ENCODE measurements at regions of chr17 and their contacts with region 1.

Region 1: GRCh38 chr17:47970704-47971463 is at the start of gene CDK5RAP3:
- DNase-seq: peak; percentile 100
- H3K4me3 Mint-ChIP-seq: peak within 1 kb of the TSS; percentile 93
- H3K27ac Mint-ChIP-seq: peak within 1 kb of the TSS; percentile 93
- H3K4me1 Mint-ChIP-seq: peaks cover 22% of the 10 kb centered on the region
- H3K27me3 Mint-ChIP-seq: no peaks in the 10 kb centered on the region
- total RNA-seq, gene CDK5RAP3: 192 and 202 TPM in 2 replicates

Region 2: GRCh38 chr17:47829870-47830269 is 141.0 kb before region 1 on chr17:
- intact Hi-C with region 1: no loop called
- DNase-seq: peak; percentile 78
- H3K4me3 Mint-ChIP-seq: peak overlapping the region; percentile 94
- H3K27ac Mint-ChIP-seq: peak overlapping the region; percentile 89
- H3K4me1 Mint-ChIP-seq: peaks cover 31% of the 10 kb centered on the region
- H3K27me3 Mint-ChIP-seq: no peaks in the 10 kb centered on the region

Region 3: DNA sequence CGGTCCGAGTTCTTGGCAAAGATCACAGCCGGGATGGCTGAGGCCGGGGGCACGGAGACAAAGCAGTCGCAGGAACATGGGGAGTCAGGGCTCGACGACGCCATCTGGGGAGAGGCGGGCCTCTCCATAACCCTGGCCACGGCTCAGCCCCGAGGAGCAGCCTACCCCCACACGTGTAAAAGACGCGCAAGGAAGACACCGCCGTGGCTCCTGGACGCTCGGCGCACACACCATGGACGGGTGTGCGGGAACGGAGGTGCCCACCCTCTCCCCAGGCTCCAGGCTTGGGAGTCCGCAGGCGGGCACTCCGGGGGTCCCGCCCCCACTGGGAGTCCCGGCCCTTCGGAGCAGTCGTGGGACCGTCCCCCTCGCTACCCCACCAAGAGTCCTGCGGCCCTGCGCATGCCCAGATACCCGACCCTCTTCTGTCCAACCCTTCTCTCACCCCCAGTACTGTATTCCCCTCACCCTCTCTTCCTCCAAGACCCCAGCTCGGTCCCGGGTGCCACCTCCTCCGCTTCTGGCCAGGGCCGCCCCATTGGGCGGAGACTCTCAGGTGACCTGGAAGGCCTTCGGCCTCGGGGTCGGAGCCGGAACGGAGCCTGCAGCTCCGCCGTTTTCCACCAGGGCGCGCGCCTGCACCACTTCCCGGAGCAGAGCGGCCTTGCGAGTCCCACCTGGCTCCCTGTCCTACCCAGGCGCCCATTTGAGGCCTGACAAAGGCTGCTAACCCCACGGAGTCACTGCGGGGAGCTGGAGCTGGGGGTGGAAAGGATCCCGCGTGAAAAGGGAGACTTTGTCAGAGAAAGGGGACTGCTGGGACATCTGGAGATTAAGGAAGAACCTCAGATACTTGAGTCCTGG is 129.9 kb before region 1 on chr17 and contains the start of gene SCRN2:
- intact Hi-C with region 1: loop called (anchors 2 kb)
- DNase-seq: peak; percentile 98
- H3K4me3 Mint-ChIP-seq: peak within 1 kb of the TSS; percentile 100
- H3K27ac Mint-ChIP-seq: peak within 1 kb of the TSS; percentile 98
- H3K4me1 Mint-ChIP-seq: peaks cover 28% of the 10 kb centered on the region
- H3K27me3 Mint-ChIP-seq: peaks cover 18% of the 10 kb centered on the region
- total RNA-seq, gene SCRN2: 24.3 and 24.8 TPM in 2 replicates

Region 4: GRCh38 chr17:47862621-47863440 is 108.1 kb before region 1 on chr17:
- intact Hi-C with region 1: no loop called
- DNase-seq: no peak
- H3K4me3 Mint-ChIP-seq: no peak overlapping the region
- H3K27ac Mint-ChIP-seq: no peak overlapping the region
- H3K4me1 Mint-ChIP-seq: peaks cover 12% of the 10 kb centered on the region
- H3K27me3 Mint-ChIP-seq: peaks cover 34% of the 10 kb centered on the region

Region 5: DNA sequence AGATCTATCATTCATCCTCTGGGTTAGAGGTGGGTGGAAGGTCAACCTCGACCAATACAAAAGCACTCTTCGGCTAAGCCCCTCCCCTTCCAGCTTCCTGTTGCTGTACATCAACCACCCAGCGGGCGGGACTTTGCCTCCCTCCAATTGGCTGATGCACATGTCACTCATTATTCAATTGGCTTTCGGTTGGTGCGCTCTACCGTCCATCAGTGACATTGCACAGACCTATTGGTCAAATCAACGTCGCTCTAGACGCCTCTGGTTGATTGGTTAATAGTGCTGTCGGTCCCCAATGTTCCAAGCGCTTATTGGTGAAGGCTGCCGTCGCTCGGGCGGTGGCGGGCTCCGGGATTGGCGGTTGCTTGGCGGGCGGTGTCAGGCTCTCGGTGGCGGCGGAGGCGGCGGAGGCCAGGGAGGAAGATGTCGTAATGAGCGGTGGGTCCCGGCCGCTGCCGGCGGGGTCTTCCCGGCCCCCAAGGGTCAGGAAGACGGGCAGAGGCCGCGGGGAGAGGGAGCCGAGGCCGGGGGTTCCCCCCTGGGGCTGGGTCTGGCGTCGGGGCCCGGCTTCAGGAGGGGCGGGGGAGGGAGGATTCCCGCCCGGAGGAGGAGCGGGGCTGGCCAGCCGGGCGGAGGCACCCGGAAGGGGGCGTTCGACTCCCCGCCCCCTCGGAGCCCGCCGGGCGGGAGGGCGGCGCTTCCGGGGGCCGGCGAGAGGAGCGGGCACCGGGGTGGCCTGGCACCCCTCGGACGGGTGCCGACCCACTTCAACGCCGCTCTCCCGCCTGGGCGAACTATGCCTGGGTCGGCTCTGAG is 74.8 kb before region 1 on chr17 and contains the start of gene SP2:
- intact Hi-C with region 1: loop called (anchors 1 kb)
- DNase-seq: peak; percentile 100
- H3K4me3 Mint-ChIP-seq: peak within 1 kb of the TSS; percentile 97
- H3K27ac Mint-ChIP-seq: peak within 1 kb of the TSS; percentile 99
- H3K4me1 Mint-ChIP-seq: peaks cover 41% of the 10 kb centered on the region
- H3K27me3 Mint-ChIP-seq: no peaks in the 10 kb centered on the region
- total RNA-seq, gene SP2: 18.3 and 21.7 TPM in 2 replicates

Region 6: DNA sequence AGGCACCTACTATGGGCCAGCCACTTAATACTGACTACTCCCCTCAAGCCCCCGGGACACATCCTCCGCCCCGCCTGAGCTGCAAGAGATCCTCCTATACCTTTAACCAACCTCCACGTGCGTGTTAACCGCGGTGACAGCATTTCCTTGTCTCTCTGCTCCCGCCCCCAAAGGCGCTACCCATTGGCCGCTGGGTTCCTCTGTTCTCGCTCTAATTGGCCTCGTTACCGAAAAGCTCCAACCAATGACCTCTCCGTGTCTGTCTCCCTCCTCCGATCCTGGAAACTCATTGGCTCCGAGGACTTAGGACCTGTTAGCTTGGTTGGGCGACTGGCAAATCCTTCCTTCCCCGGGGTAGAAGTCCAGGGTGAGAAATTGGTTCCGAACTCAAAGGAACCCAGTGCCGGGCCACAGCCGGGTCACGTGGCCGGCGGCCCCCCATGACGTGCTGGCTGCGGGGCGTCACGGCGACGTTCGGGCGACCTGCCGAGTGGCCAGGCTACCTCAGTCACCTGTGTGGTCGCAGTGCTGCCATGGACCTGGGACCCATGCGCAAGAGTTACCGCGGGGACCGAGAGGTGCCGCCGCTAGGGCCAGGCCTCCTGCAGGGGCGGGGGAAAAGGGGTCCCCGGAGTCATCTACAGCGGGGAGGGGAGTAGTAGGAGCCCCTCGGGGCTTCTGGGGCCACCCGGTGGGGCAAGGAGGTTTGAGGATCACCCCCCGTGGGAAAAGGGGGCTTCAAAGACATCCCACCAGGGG is 29.5 kb before region 1 on chr17 and contains the start of gene PNPO:
- intact Hi-C with region 1: loop called (anchors 1 kb)
- DNase-seq: peak; percentile 98
- H3K4me3 Mint-ChIP-seq: peak within 1 kb of the TSS; percentile 90
- H3K27ac Mint-ChIP-seq: peak within 1 kb of the TSS; percentile 94
- H3K4me1 Mint-ChIP-seq: peaks cover 42% of the 10 kb centered on the region
- H3K27me3 Mint-ChIP-seq: no peaks in the 10 kb centered on the region
- total RNA-seq, gene PNPO: 61.5 and 69.4 TPM in 2 replicates

Region 7: GRCh38 chr17:47949136-47949759 is 21.6 kb before region 1 on chr17:
- intact Hi-C with region 1: loop called (anchors 1 kb)
- DNase-seq: peak; percentile 96
- H3K4me3 Mint-ChIP-seq: peak overlapping the region; percentile 71
- H3K27ac Mint-ChIP-seq: peak overlapping the region; percentile 78
- H3K4me1 Mint-ChIP-seq: peaks cover 33% of the 10 kb centered on the region
- H3K27me3 Mint-ChIP-seq: no peaks in the 10 kb centered on the region

Region 8: GRCh38 chr17:48047741-48048383 is 77.0 kb after region 1 on chr17 and contains the start of gene NFE2L1:
- intact Hi-C with region 1: loop called (anchors 2 kb)
- DNase-seq: peak; percentile 99
- H3K4me3 Mint-ChIP-seq: peak within 1 kb of the TSS; percentile 96
- H3K27ac Mint-ChIP-seq: peak within 1 kb of the TSS; percentile 96
- H3K4me1 Mint-ChIP-seq: peaks cover 43% of the 10 kb centered on the region
- H3K27me3 Mint-ChIP-seq: no peaks in the 10 kb centered on the region
- total RNA-seq, gene NFE2L1: 85.2 and 93.1 TPM in 2 replicates